ENCODE measurements at regions of chr1 and their contacts with region 1.

Region 1: DNA sequence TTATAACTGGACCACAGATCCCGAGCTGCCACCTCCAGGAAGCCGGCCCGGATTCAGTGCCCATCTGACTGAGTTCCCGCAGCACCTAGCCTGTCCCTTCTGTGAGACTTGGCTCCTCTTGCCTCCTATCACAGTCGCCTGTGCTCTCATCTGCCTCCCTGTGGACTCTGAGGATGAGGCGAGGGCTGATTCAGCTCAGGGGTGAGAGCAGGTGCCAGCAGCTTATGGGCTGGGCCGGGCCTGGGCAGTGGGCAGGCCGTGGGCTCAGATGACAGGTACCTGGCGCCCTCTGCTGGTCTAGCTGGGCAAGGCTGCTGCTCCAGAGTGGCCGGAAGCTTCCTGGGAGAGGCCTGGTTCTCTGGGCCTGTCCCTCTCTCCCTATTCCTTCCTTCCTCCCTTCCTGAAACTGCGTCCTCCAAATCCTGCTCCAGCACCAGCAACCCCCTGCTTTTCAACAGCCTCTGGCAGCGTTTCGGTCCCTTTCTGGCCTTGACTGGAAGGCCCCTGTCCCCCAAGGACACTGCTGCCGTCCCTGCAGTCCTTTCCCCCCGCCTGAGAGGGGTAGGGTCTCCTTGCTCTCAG is 17.3 kb upstream of the PCSK9 start:
- DNase-seq: peak; percentile 92
- H3K27ac ChIP-seq: peak overlapping the region; percentile 52
- CTCF ChIP-seq: peak; percentile 93

Region 2: DNA sequence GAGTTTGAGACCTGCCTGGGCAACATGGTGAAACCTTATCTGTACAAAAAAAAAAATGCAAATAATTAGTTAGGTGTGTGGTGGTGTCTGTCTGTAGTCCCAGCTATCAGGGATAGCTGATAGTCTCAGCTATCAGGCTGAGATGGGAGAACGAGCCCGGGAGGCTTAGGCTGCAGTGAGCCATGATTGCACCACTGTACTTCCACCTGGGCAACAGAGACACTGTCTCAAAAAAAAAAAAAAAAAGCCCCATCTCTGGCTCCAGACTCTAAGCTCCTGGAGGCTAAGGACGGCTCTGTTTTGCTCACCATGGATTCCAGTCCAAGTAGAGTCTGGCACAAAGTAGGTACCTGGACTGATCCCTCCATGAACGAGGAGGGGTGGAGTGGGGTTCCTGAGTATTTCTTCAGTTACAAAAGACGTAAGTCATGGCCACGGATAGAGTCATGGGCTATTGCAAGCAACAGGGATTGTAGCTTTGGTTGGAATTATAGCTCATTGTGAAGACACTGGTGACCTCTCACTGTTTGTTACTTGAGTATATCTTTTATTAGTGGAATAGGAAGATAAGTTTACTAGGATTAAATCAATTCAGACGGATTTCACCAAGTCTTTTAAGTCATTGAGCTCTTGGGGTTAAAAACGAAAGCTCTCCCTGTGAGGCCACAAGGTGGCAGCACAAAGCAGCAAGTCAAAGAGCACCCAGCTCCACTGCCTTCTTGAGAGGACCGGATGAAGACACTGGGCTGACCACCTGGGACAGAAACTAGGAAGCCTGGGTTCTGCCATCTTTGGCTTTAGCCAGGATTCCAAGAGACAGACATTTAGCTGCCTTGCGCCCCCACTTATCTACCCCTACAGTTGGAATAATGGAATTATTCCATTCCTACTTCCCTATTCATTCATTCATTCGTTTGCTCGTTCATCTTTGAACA is 77.2 kb before region 1 on chr1:
- CTCF ChIA-PET with region 1: interaction called, 39 read pairs
- POLR2A ChIA-PET with region 1: no interaction called
- DNase-seq: peak; percentile 70
- H3K27ac ChIP-seq: peak overlapping the region; percentile 47
- CTCF ChIP-seq: peak; percentile 83

Region 3: GRCh38 chr1:54950369-54951163 is 71.5 kb before region 1 on chr1:
- CTCF ChIA-PET with region 1: interaction called, 39 read pairs
- POLR2A ChIA-PET with region 1: no interaction called
- DNase-seq: peak; percentile 80
- H3K27ac ChIP-seq: peak overlapping the region; percentile 79
- CTCF ChIP-seq: peak; percentile 79

Region 4: DNA sequence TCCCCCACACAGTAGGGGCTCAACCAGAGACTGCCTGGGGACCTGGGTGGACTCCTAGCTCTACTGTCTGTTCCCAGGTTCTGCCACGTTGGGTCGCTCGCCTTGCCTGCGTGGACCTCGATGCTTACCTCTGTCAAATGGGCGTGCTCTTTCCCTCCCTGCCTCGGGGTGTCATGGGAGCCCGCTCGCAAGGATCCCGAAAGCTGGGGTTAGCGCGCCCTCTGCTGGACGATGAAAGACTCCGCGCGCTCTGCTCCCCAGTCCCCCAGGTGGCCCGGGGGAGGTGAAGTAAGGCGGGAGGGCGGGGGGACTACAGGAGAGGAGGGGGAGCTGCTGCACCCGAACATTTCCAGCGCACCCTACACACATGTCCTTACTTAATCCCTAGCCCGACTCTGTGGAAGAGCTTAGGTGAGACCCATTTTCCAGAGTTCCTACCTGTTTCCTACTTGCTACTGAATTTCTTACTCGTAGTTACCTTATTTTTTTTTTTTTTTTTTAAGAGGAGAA is 25.6 kb before region 1 on chr1:
- CTCF ChIA-PET with region 1: interaction called, 13 read pairs
- POLR2A ChIA-PET with region 1: no interaction called
- DNase-seq: peak; percentile 90
- H3K27ac ChIP-seq: no peak overlapping the region
- CTCF ChIP-seq: peak; percentile 85

Region 5: GRCh38 chr1:55002686-55003085 is 19.4 kb before region 1 on chr1:
- CTCF ChIA-PET with region 1: interaction called, 13 read pairs
- POLR2A ChIA-PET with region 1: no interaction called
- DNase-seq: no peak
- H3K27ac ChIP-seq: no peak overlapping the region
- CTCF ChIP-seq: no peak

Region 6: DNA sequence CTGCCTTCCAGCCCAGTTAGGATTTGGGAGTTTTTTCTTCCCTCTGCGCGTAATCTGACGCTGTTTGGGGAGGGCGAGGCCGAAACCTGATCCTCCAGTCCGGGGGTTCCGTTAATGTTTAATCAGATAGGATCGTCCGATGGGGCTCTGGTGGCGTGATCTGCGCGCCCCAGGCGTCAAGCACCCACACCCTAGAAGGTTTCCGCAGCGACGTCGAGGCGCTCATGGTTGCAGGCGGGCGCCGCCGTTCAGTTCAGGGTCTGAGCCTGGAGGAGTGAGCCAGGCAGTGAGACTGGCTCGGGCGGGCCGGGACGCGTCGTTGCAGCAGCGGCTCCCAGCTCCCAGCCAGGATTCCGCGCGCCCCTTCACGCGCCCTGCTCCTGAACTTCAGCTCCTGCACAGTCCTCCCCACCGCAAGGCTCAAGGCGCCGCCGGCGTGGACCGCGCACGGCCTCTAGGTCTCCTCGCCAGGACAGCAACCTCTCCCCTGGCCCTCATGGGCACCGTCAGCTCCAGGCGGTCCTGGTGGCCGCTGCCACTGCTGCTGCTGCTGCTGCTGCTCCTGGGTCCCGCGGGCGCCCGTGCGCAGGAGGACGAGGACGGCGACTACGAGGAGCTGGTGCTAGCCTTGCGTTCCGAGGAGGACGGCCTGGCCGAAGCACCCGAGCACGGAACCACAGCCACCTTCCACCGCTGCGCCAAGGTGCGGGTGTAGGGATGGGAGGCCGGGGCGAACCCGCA is 17.5 kb after region 1 on chr1 and contains the start of gene PCSK9:
- CTCF ChIA-PET with region 1: interaction called, 13 read pairs
- POLR2A ChIA-PET with region 1: no interaction called
- DNase-seq: peak; percentile 92
- H3K27ac ChIP-seq: peak within 1 kb of the TSS; percentile 89
- CTCF ChIP-seq: no peak

Region 7: GRCh38 chr1:55140546-55140983 is 118.5 kb after region 1 on chr1:
- CTCF ChIA-PET with region 1: no interaction called
- POLR2A ChIA-PET with region 1: no interaction called
- DNase-seq: peak; percentile 76
- H3K27ac ChIP-seq: no peak overlapping the region
- CTCF ChIP-seq: peak; percentile 84

Measured in RWPE1 (cell line).